HCT116 (cell line): ENCODE measurements at regions of chr12 and their contacts with region 1.

Region 1: GRCh38 chr12:105164068-105164467 is 56.5 kb downstream of the WASHC4 start:
- DNase-seq: no peak
- ATAC-seq: no peak
- H3K4me3 ChIP-seq: no peak overlapping the region
- H3K27ac ChIP-seq: no peak overlapping the region
- H3K4me1 ChIP-seq: no peaks in the 10 kb centered on the region
- H3K27me3 ChIP-seq: no peaks in the 10 kb centered on the region
- CTCF ChIP-seq: no peak
- POLR2A ChIP-seq: no peak
- RAD21 ChIP-seq: no peak

Region 2: GRCh38 chr12:105120551-105120950 is 43.5 kb before region 1 on chr12:
- CTCF ChIA-PET with region 1: no interaction called
- POLR2A ChIA-PET with region 1: no interaction called
- RAD21 ChIA-PET with region 1: no interaction called
- intact Hi-C with region 1: loop called (anchors 5 kb)
- DNase-seq: no peak
- ATAC-seq: no peak
- H3K4me3 ChIP-seq: no peak overlapping the region
- H3K27ac ChIP-seq: no peak overlapping the region
- H3K4me1 ChIP-seq: no peaks in the 10 kb centered on the region
- H3K27me3 ChIP-seq: no peaks in the 10 kb centered on the region
- CTCF ChIP-seq: no peak
- POLR2A ChIP-seq: no peak
- RAD21 ChIP-seq: no peak

Region 3: DNA sequence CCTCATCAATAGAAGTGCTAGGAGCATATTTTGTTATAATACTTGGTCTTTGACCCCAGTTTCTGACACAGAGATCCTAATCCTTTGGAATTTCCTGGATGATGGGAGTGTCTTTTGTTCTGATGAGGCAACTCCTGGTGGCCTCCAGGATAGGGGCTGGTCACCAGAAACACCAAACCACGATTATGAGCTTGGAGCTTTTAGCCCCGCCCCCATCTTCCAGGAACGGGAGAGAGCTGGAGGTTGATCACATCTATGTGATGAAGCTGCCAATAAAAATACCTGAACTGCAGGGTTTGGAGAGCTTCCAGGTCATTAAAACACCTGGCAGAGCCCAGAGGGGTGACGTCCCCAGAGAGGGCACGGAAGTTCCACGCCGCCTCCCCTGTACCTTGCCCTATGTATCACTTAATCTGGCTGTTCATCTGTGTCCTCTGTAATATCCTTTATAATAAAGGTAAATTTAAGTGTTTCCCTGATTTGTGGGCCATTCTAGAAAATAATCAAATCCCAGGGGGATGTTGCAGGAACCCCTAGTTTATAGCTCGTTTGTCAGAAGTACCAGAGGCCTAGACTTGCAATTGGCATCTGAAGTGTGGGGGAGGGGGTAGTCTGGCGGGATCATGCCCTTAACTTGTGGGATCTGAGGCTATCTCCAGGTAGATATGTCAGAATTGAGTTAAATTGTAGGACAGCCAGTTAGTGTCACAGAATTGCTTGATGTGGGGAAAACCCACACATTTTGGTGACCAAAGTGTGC is 50.7 kb after region 1 on chr12:
- CTCF ChIA-PET with region 1: no interaction called
- POLR2A ChIA-PET with region 1: no interaction called
- RAD21 ChIA-PET with region 1: no interaction called
- intact Hi-C with region 1: loop called (anchors 1 kb)
- DNase-seq: no peak
- ATAC-seq: peak; percentile 69
- H3K4me3 ChIP-seq: no peak overlapping the region
- H3K27ac ChIP-seq: no peak overlapping the region
- H3K4me1 ChIP-seq: peaks cover 7% of the 10 kb centered on the region in 2 experiments; a peak in 3 of 4 replicates
- H3K27me3 ChIP-seq: no peaks in the 10 kb centered on the region
- CTCF ChIP-seq: no peak
- POLR2A ChIP-seq: no peak
- RAD21 ChIP-seq: no peak

Region 4: DNA sequence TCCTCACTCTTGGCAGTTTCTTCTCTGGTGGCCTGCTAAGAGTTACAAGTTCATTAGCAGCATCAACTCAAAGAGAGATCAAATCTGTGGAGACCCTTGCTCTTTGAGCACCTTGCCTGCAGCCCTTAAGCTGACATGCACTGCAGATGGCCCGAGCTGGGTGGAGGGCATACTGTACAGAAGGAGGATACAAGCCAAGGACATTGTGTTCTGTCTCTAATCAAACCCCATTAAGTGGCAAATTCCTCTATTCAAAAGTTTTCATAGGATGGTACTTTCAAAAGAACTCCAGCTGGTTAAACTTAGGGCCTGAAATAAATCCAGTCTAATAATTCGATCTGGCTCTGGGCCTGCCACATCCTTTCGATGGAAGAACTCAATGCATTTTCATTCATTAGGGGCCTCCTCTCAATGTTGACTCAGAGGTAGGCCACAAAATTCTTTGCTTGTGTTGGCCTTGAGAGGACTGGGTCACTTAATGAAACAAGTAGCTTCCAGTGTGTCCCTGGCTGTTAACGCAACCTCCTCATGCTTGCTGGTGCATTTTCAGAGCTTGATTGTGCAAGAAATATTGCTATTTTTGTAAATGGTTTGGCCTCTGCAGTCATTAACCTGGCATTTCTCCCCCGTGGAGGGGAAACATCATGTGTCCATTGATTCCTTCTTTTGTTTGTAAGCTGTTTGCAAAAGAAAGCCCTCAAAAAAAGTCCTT is 656.5 kb after region 1 on chr12:
- CTCF ChIA-PET with region 1: no interaction called
- POLR2A ChIA-PET with region 1: no interaction called
- RAD21 ChIA-PET with region 1: no interaction called
- intact Hi-C with region 1: no loop called
- DNase-seq: no peak
- ATAC-seq: no peak
- H3K4me3 ChIP-seq: no peak overlapping the region
- H3K27ac ChIP-seq: no peak overlapping the region
- H3K4me1 ChIP-seq: no peaks in the 10 kb centered on the region
- H3K27me3 ChIP-seq: peaks cover 17% of the 10 kb centered on the region
- CTCF ChIP-seq: no peak
- POLR2A ChIP-seq: no peak
- RAD21 ChIP-seq: no peak